Mammary epithelial cell (primary cell): ENCODE measurements at regions of chr14 and their contacts with region 1.

Region 1: GRCh38 chr14:30034152-30034551 is 106.5 kb upstream of the PRKD1 start:
- DNase-seq: no peak
- H3K4me3 ChIP-seq: no peak overlapping the region
- H3K27ac ChIP-seq: no peak overlapping the region
- H3K4me1 ChIP-seq: no peaks in the 10 kb centered on the region
- H3K27me3 ChIP-seq: no peaks in the 10 kb centered on the region
- CTCF ChIP-seq: no peak

Region 2: DNA sequence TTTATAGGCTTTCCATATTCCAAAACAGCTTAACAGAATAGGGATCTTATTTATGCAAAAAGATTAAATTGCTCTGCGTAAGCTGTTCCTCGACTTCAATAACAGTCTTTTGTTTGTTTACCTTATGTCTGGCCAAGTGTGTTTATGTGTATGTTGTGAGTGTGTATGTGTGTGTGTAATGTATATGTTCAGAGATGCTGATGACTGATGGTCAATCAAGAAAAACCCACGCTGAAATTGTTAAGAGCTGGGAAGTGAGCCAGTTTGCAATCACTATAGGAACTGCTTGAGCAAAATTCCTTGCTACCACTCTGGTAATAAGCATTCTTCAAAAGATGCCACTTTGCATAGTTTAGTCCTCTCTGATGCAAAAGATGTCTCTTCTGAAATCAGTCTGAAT is 166.2 kb before region 1 on chr14:
- CTCF ChIA-PET with region 1: interaction called, 23 read pairs
- dilution Hi-C with region 1: no loop called
- in situ Hi-C with region 1: no loop called
- intact Hi-C with region 1: no loop called
- DNase-seq: no peak
- H3K4me3 ChIP-seq: no peak overlapping the region
- H3K27ac ChIP-seq: no peak overlapping the region
- H3K4me1 ChIP-seq: no peaks in the 10 kb centered on the region
- H3K27me3 ChIP-seq: no peaks in the 10 kb centered on the region
- CTCF ChIP-seq: no peak

Region 3: GRCh38 chr14:30054201-30054600 is 20.0 kb after region 1 on chr14:
- CTCF ChIA-PET with region 1: no interaction called
- dilution Hi-C with region 1: no loop called
- in situ Hi-C with region 1: no loop called
- intact Hi-C with region 1: no loop called
- DNase-seq: no peak
- H3K4me3 ChIP-seq: no peak overlapping the region
- H3K27ac ChIP-seq: no peak overlapping the region
- H3K4me1 ChIP-seq: no peaks in the 10 kb centered on the region
- H3K27me3 ChIP-seq: no peaks in the 10 kb centered on the region
- CTCF ChIP-seq: no peak

Region 4: GRCh38 chr14:30770376-30770775 is 736.2 kb after region 1 on chr14:
- CTCF ChIA-PET with region 1: no interaction called
- dilution Hi-C with region 1: no loop called
- in situ Hi-C with region 1: no loop called
- intact Hi-C with region 1: no loop called
- DNase-seq: no peak
- H3K4me3 ChIP-seq: no peak overlapping the region
- H3K27ac ChIP-seq: no peak overlapping the region
- H3K4me1 ChIP-seq: no peaks in the 10 kb centered on the region
- H3K27me3 ChIP-seq: peaks cover 3% of the 10 kb centered on the region
- CTCF ChIP-seq: no peak